ENCODE measurements at regions of chr10 and their contacts with region 1.

Region 1: DNA sequence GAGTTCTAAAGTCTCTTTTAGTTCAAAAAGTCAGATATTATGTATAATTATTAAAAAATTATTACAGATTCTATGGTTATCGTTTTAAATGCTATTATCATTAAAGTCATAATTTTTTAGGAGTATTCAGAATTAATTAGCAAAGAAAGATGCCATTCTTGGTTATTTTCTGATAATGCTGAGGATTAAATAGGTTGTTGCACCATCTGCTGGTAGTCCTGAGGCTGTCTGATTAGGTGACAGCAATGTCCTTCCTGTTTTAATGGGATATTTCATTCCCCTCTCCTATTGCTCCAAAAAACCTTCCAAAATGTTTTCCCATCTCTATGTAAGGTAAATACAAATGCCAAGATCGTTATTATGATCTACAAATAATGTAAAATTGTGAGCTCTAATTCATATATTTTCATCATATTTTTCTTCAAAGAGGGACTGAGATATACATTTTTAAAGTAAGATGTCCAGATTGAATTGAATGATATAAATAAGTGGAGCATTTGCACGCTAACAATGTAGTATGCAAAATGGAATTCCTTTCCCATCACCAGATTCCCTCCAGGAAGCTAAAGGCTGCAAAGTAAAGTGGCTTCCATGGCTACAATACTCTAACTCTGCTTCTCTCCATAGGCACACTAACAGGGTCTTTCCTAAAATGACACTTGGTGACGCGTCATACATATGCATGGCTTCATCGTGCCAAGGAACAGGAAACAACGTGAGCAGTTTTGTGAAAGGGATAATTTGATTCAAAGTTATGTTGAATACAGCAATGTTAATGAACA is 58.8 kb upstream of the AKR1E2 start:
- DNase-seq: no peak

Region 2: GRCh38 chr10:3197348-3198003 is 1569.7 kb before region 1 on chr10:
- intact Hi-C with region 1: loop called in 1 of 2 experiments (anchors 10 kb)
- DNase-seq: peak; percentile 94

Region 3: GRCh38 chr10:4512671-4513240 is 254.5 kb before region 1 on chr10:
- intact Hi-C with region 1: loop called in 1 of 2 experiments (anchors 10 kb)
- DNase-seq: no peak

Region 4: GRCh38 chr10:4663162-4663904 is 103.9 kb before region 1 on chr10:
- intact Hi-C with region 1: loop called in 1 of 2 experiments (anchors 5 kb)
- DNase-seq: no peak

Region 5: DNA sequence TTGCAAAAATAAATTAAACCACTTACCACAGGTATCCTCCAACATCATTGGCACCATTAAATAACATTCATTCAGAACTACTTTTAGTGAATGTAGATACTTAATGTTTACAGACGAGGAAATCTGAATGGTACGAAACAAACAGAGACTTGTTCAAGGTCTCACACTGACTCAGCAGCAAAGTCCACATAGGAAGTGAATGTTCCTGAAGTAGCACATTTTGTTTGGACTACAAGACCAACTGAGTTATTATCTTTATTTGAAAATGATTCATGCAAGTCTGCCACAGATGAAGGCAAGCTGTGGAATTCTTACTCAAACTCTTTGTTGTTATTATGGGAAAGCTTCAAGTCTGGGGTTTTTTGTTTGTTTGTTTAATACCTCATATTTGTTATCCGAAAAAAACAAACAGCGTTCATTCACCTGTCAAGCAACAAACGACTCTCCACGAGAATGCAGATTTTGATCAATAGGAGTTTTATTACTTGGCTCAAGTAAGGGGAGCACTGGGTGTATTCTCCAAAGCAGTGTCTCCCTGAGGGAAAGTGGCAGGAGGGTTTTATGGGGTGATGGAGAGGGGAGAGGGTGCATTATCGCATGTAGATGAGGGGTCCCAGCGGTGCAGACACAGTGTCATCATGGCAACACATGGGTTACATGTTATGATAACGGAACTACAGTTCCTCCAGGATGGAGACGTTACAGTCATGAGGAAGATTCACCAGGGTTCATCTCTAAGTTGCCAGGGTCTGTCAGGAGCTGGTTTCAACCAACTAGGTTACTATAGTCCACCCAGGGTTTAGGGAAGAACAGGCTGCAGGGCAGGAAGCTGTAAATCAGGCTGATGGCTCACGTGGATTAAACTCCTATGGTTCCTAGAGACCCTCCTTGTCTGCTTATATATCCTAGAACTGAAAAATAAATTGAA is 88.9 kb before region 1 on chr10:
- intact Hi-C with region 1: loop called in 1 of 2 experiments (anchors 10 kb)
- DNase-seq: no peak